HEK293T (cell line): ENCODE measurements at regions of chr17 and their contacts with region 1.

Region 1: DNA sequence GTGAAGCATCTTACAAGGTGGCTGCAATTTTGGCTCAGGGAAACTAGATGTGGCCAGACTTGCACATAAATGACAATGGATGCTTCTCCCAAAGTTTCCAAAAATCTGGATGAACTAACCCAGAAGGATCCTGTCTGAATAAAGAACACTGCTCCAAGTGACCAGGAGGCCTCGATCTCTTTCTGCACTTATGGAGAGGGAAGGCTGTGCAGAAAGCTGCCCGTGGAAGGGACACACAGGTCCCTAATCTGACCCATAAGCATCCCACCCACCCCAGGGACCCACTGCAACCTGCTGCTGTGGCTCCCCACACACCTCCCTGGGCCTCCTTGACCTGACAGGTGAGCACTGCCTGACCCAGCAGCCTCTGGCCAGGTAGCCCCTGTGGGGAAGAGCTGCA is 74.6 kb upstream of the SEC14L1 start:
- DNase-seq: no peak

Region 2: GRCh38 chr17:76868176-76868668 is 197.9 kb before region 1 on chr17 and contains the start of gene MGAT5B:
- CTCF ChIA-PET with region 1: interaction called, 10 read pairs
- POLR2A ChIA-PET with region 1: no interaction called
- DNase-seq: peak; percentile 98

Region 3: GRCh38 chr17:77011173-77012011 is 54.8 kb before region 1 on chr17:
- CTCF ChIA-PET with region 1: interaction called, 21 read pairs
- POLR2A ChIA-PET with region 1: no interaction called
- DNase-seq: no peak

Region 4: DNA sequence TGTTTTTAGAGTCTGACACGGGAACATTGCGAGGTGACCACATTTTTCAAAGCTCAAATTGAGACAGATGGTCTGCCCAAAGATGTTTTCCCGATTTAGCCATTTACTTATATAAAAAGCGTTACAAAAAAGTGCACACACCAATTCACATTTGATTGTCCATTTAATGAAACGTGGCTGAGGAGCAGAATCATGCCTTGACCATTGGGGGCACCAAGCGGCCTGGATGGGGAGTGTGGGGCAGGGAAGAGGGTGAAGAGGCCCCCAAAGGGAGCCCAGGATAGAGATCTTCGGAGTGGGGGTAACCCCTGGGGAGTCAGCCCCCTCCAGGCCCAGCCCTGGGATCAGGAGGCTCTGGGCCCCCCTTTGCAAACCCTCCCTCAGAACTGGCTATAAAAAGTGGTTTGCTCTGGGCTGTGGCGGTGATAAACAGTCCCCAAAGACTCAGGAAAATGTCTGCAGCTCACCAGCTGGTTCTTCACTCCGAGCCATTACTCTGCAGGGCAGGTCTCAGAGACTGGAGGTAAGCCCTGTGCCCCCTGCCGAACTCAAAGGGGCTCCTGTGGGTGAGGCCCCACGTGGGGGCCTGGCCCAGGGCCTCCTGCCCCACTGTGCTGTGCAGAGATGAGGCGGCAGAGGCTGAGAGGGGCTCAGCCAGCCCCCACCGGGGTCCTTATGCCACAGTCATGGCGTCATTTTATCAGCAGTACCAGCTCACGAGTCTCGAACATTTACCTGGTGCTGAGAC is 31.3 kb before region 1 on chr17:
- CTCF ChIA-PET with region 1: no interaction called
- POLR2A ChIA-PET with region 1: no interaction called
- DNase-seq: no peak

Region 5: DNA sequence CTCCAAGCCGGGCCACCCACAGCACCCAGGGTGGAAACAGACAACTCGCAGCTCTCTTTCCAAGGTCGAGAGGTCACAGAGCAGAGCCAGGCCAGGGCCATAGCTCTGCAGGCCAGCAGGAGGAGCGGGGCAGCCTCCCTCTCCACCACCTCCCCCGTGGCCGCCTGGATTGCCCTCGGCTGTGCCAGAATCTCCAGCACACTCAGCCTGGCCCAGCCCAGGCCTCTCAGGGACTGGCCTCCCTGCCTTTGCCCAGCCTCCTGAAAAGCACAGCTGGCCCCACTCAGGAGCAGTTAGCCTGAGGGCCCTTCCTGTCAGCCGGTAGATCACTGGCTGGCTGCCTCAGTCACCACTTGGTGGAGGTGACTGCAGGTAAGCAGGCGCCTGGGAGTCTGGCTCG is 11.2 kb before region 1 on chr17:
- CTCF ChIA-PET with region 1: interaction called, 18 read pairs
- POLR2A ChIA-PET with region 1: no interaction called
- DNase-seq: no peak

Region 6: DNA sequence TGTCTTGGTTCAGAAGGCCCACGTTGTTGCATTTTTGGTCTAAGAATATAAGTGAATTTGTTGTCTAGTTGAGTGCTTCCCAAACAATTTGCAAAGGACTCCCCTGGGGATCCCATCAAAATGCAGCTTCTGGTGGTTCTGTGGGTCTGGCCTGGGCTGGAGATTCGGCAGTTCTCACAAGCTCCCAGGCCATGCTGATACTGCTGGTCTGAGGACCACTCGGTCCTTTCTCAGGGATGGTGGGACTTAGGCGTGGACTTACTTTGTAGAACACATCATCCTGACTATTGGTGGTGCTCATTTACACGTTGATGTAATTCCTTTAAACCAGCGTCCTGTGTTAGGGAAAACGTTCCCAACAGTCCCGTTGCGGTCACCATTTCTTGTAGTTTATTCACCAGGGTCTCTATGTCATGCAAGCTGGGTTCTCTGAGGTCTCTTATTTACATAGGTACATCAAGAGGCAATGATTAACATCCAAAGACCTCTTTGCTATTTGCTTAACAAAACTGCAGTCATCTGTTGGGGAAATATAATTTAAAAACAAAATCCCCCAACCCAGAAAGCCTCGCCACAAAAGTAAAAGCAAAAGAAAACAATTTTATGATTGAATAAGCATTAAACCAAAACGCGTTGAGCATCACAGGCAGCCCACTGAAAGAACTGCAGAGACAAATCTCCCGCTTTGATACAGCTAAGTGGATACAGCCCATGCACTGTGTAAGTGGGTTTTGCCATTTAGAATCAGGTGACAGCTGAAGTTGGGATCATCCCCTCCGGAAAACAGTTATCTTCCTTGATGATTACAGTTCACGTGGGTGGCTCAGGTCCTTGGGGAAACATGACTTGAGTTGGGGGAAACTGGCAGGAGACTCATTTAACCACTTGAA is 35.6 kb after region 1 on chr17:
- CTCF ChIA-PET with region 1: no interaction called
- POLR2A ChIA-PET with region 1: no interaction called
- DNase-seq: no peak

Region 7: DNA sequence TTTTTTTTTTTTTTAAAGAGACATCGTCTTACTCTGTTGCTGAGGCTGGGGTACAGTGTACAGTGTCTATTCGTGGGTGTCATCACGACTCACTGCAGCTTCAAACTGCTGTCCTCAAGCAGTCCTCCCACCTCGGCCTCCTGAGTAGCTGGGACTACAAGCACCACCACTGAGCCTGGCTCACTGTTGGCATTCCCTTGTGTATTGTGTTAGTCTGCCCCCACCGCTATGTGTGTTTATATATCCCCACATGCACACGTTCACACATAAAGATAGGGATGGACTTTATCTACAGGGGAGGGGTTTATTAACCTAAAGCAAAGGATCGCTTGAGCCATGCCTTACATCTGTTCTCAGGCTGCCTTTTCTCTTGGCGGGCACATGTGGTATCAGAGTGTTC is 138.4 kb after region 1 on chr17:
- CTCF ChIA-PET with region 1: no interaction called
- POLR2A ChIA-PET with region 1: no interaction called
- DNase-seq: no peak

Region 8: GRCh38 chr17:77214743-77215142 is 148.6 kb after region 1 on chr17:
- CTCF ChIA-PET with region 1: no interaction called
- POLR2A ChIA-PET with region 1: no interaction called
- DNase-seq: peak; percentile 65